Right lobe of liver (tissue), 6 donors: ENCODE measurements at regions of chr15 and their contacts with region 1.

Region 1: GRCh38 chr15:40115670-40116093 is 7.0 kb upstream of the BMF start:
- DNase-seq: peak; percentile 76 to 83 (median 82)
- ATAC-seq: peak; percentile 90 to 97 (median 94)
- H3K4me3 ChIP-seq: no peak overlapping the region
- H3K27ac ChIP-seq: no peak overlapping the region
- H3K4me1 ChIP-seq: no peaks in the 10 kb centered on the region
- H3K27me3 ChIP-seq: no peaks in the 10 kb centered on the region
- CTCF ChIP-seq: no peak
- POLR2A ChIP-seq: no peak

Region 2: GRCh38 chr15:40054605-40055545 is 60.8 kb before region 1 on chr15:
- intact Hi-C with region 1: loop called in 1 of 2 experiments (anchors 10 kb)
- DNase-seq: peak; percentile 80 to 96 (median 90)
- ATAC-seq: peak; percentile 77 to 87 (median 82)
- H3K4me3 ChIP-seq: no peak overlapping the region
- H3K27ac ChIP-seq: peak overlapping the region in 2 of 3 donors; percentile 19 to 50
- H3K4me1 ChIP-seq: peaks cover 0 to 28% (median 12%) of the 10 kb centered on the region in 4 donors
- H3K27me3 ChIP-seq: no peaks in the 10 kb centered on the region
- CTCF ChIP-seq: no peak
- POLR2A ChIP-seq: no peak